ENCODE measurements at regions of chr1 and their contacts with region 1.

Region 1: DNA sequence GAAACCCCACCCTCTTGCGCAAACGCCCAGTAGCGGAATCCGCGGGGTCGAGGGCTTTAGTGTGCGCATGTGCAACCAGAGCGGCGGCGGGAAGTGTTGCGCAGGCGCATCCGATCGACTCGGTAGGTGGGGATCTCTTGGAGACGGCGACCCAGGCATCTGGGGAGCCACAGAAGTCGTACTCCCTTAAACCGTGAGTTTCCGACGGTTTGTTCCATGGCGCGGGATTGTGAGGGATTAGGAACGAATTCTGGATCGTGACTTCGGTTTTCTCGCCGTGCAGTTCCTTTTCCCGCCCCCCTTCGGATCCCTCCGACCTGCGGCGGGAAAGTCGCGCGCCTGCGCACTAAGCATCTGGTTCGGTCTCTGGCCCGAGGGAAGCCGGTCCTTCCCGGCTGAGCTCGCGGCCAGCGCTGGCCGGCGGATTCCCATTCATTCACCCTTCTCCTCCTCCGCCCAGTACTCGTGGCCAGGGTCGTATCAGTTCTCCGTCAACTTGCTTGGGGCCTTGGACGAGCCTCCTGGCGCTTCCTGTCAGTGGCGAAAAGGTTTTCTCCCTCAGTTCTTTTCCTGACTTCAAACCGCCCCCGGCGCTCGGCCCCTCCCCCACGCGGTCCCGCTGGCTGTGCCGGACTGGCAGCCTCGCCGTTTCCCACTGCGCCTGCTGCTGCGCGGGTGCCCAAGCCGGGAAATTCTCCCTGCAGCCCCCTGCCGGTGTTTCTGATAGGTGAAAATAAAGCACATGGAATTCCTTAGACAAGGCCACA is at the start of gene CDC7:
- DNase-seq: peak; percentile 94
- H3K4me3 ChIP-seq: peak within 1 kb of the TSS; percentile 92
- H3K27ac ChIP-seq: peak within 1 kb of the TSS; percentile 80
- H3K4me1 ChIP-seq: peaks cover 17% of the 10 kb centered on the region
- H3K27me3 ChIP-seq: no peaks in the 10 kb centered on the region
- total RNA-seq, gene CDC7: 3.0 and 3.5 TPM in 2 replicates

Region 2: DNA sequence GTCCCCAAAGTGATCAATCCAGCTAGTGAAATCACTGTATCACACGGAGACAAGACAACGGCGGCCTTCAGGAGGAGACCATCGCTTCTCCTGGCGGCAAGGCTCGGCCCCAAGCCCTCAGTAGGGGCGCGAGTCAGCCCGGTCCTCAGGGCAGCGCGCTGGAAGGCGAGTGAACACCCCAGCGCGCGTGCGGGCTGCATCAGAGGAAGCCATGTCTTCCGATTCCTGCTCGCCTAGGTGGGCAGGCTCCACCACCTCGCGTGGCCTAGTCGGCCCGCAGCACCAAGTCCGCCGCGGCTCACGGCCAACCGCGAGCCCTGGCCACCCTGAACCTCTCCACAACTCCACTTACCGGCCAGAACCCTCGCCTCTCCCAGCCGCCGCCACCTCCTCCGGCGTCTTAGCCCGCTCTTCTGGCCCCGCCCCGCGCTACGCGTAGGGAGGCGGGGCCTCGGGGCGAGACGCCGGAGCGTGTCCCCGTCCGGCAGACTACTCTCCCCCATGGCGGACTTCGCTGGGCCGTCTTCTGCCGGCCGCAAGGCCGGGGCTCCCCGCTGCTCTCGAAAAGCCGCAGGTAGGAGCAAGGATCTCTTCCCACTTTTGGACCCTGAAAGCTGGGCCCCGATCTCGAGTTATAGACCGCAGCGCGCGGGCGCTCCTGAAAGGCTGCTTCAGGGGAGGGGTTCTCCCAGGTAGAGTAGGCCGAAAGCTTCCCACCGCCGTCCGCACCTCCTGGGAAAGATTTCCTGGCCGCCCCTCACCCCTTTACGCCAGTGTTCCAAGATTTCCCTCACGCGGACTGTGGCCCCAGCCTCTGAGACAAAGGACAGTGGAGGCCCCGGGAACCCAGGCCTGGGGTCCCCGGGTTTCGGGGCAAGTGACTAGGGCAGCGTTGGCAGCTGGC is 797.9 kb after region 1 on chr1 and contains the starts of genes GLMN and RPAP2:
- in situ Hi-C with region 1: loop called (anchors 10 kb)
- DNase-seq: peak; percentile 95
- H3K4me3 ChIP-seq: peak within 1 kb of the TSS; percentile 87
- H3K27ac ChIP-seq: peak within 1 kb of the TSS; percentile 77
- H3K4me1 ChIP-seq: peaks cover 22% of the 10 kb centered on the region
- H3K27me3 ChIP-seq: no peaks in the 10 kb centered on the region
- total RNA-seq, gene GLMN: 10.7 and 13.0 TPM in 2 replicates
- total RNA-seq, gene RPAP2: 9.7 and 17.4 TPM in 2 replicates